Gastrocnemius medialis (tissue), 4 donors: ENCODE measurements at regions of chr12 and their contacts with region 1.

Region 1: GRCh38 chr12:50924439-50925341 is 27.7 kb upstream of the HIGD1C start:
- DNase-seq: peak; percentile 96 to 97
- ATAC-seq: peak; percentile 85 to 91
- H3K4me3 ChIP-seq: peak overlapping the region; percentile 64 to 89 (median 79)
- H3K27ac ChIP-seq: peak overlapping the region; percentile 83 to 91 (median 87)
- H3K4me1 ChIP-seq: peaks cover 35 to 41% of the 10 kb centered on the region in 2 donors
- H3K27me3 ChIP-seq: no peaks in the 10 kb centered on the region
- CTCF ChIP-seq: no peak
- POLR2A ChIP-seq: peak; percentile 32 to 85

Region 2: GRCh38 chr12:50763639-50764285 is 160.9 kb before region 1 on chr12 and contains the start of gene ATF1:
- in situ Hi-C with region 1: no loop called
- intact Hi-C with region 1: loop called (anchors 2 kb)
- DNase-seq: peak; percentile 82 to 93
- ATAC-seq: peak; percentile 75 to 80
- H3K4me3 ChIP-seq: peak within 1 kb of the TSS; percentile 92 to 99 (median 98)
- H3K27ac ChIP-seq: peak within 1 kb of the TSS; percentile 97 to 100 (median 99)
- H3K4me1 ChIP-seq: peaks cover 28 to 42% of the 10 kb centered on the region in 2 donors
- H3K27me3 ChIP-seq: no peaks in the 10 kb centered on the region
- CTCF ChIP-seq: peak in 1 of 5 experiments; percentile 22
- POLR2A ChIP-seq: peak; percentile 83 to 90
- total RNA-seq, gene ATF1: 16.4 to 44.5 (median 37.5) TPM

Region 3: GRCh38 chr12:50825372-50825838 is 99.3 kb before region 1 on chr12:
- in situ Hi-C with region 1: no loop called
- intact Hi-C with region 1: loop called (anchors 2 kb)
- DNase-seq: no peak
- ATAC-seq: peak; percentile 83 to 86
- H3K4me3 ChIP-seq: no peak overlapping the region
- H3K27ac ChIP-seq: peak overlapping the region; percentile 62 to 74 (median 70)
- H3K4me1 ChIP-seq: peaks cover 0 to 14% of the 10 kb centered on the region in 2 donors
- H3K27me3 ChIP-seq: no peaks in the 10 kb centered on the region
- CTCF ChIP-seq: peak; percentile 53 to 86 (median 66)
- POLR2A ChIP-seq: no peak

Region 4: DNA sequence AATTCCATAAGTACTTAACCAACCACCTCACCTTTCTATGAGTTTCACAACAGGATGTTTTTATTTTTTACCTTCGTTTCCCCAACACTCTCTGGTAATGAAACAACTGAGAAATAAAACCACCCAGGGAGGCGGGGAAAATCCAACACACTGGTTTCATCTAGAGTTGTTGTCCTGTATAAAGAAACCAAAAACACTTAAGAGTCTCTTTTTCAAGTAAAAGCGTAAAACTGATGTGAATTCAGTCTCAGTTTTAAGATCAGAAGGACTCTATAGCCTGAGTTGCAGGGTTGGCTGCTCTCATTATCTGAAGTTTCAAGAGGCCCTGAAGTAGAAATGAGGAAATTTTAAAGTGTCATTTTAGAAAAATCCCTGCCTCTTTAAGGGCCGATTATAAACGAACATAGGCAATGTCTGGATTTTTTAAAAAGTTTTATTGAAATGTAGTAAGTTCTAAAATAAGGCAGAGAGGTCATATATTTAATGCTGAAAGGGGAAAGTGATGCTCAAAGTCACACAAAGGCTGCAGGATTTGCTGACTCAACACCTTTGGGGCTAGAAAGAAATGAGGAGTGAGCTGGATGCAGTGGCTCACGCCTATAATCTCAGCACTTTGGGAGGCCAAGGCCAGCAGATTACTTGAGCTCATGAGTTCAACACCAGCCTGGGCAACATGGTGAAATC is 54.8 kb after region 1 on chr12:
- in situ Hi-C with region 1: loop called in 1 of 4 experiments (anchors 5 kb)
- intact Hi-C with region 1: no loop called
- DNase-seq: no peak
- ATAC-seq: no peak
- H3K4me3 ChIP-seq: no peak overlapping the region
- H3K27ac ChIP-seq: peak overlapping the region in 2 of 4 donors; percentile 7 to 91
- H3K4me1 ChIP-seq: peaks cover 14 to 39% of the 10 kb centered on the region in 2 donors
- H3K27me3 ChIP-seq: no peaks in the 10 kb centered on the region
- CTCF ChIP-seq: no peak
- POLR2A ChIP-seq: no peak

Region 5: GRCh38 chr12:51025836-51026638 is 101.3 kb after region 1 on chr12 and contains the start of gene SLC11A2:
- in situ Hi-C with region 1: loop called in 1 of 4 experiments (anchors 10 kb)
- intact Hi-C with region 1: loop called (anchors 2 kb)
- DNase-seq: peak; percentile 97 to 98
- ATAC-seq: peak; percentile 74
- H3K4me3 ChIP-seq: peak within 1 kb of the TSS; percentile 72 to 97 (median 90)
- H3K27ac ChIP-seq: peak within 1 kb of the TSS; percentile 93 to 100 (median 97)
- H3K4me1 ChIP-seq: peaks cover 27 to 33% of the 10 kb centered on the region in 2 donors
- H3K27me3 ChIP-seq: no peaks in the 10 kb centered on the region
- CTCF ChIP-seq: peak in 2 of 5 experiments; percentile 6 to 27
- POLR2A ChIP-seq: peak; percentile 79 to 88
- total RNA-seq, gene SLC11A2: 24.0 to 65.4 (median 47.0) TPM

Region 6: DNA sequence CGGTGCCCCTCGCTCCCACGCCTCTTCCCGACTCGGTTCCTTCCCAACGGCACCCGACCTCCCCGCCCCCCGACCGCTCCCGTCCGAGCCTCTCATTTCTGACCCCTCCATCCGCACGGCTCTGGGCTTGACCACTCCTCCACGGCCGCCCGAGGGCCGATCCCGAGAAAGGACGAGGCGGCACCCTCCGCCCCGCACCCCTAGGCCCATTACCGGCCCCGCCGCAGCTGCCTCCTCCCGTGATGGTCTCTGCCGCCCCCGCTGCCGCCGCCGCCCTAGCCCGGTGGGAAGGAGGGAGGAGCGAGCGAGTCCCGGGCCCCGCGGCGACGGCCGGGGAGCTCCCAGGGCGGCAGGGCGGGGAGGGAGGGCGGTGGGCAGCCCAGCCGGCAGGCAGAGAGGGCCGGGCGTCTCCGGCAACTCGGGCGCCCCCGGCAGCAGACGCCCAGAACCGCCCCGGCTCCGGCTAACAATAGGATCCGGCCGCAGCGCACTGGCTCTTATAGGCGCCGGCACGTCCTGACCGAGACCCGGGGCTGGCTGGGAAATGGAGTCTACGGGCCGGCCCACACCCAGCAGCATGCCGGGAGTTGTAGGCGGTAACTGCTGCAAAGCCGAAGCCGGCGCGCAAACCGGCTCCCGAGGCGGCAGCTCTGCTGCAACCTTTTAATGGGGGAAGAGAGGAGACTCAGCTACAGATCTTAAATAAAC is 158.6 kb after region 1 on chr12 and contains the start of gene CSRNP2:
- in situ Hi-C with region 1: no loop called
- intact Hi-C with region 1: no loop called
- DNase-seq: peak; percentile 96
- ATAC-seq: peak; percentile 94 to 96
- H3K4me3 ChIP-seq: peak within 1 kb of the TSS; percentile 91 to 98 (median 94)
- H3K27ac ChIP-seq: peak within 1 kb of the TSS; percentile 87 to 97 (median 94)
- H3K4me1 ChIP-seq: peaks cover 17 to 28% of the 10 kb centered on the region in 2 donors
- H3K27me3 ChIP-seq: no peaks in the 10 kb centered on the region
- CTCF ChIP-seq: peak in 1 of 5 experiments; percentile 12
- POLR2A ChIP-seq: peak; percentile 100
- total RNA-seq, gene CSRNP2: 17.3 to 29.5 (median 22.0) TPM

Region 7: GRCh38 chr12:51217968-51218606 is 293.4 kb after region 1 on chr12 and contains the start of gene POU6F1:
- in situ Hi-C with region 1: no loop called
- intact Hi-C with region 1: loop called (anchors 5 kb)
- DNase-seq: peak; percentile 52 to 77
- ATAC-seq: peak; percentile 87 to 88
- H3K4me3 ChIP-seq: peak within 1 kb of the TSS; percentile 85 to 98 (median 89)
- H3K27ac ChIP-seq: peak within 1 kb of the TSS; percentile 98 to 100 (median 99)
- H3K4me1 ChIP-seq: peaks cover 17 to 19% of the 10 kb centered on the region in 2 donors
- H3K27me3 ChIP-seq: no peaks in the 10 kb centered on the region
- CTCF ChIP-seq: peak; percentile 31 to 92 (median 65)
- POLR2A ChIP-seq: peak; percentile 68 to 74
- total RNA-seq, gene POU6F1: 8.1 to 11.1 (median 9.9) TPM